Breast epithelium (tissue), 4 donors: ENCODE measurements at regions of chr2 and their contacts with region 1.

Region 1: DNA sequence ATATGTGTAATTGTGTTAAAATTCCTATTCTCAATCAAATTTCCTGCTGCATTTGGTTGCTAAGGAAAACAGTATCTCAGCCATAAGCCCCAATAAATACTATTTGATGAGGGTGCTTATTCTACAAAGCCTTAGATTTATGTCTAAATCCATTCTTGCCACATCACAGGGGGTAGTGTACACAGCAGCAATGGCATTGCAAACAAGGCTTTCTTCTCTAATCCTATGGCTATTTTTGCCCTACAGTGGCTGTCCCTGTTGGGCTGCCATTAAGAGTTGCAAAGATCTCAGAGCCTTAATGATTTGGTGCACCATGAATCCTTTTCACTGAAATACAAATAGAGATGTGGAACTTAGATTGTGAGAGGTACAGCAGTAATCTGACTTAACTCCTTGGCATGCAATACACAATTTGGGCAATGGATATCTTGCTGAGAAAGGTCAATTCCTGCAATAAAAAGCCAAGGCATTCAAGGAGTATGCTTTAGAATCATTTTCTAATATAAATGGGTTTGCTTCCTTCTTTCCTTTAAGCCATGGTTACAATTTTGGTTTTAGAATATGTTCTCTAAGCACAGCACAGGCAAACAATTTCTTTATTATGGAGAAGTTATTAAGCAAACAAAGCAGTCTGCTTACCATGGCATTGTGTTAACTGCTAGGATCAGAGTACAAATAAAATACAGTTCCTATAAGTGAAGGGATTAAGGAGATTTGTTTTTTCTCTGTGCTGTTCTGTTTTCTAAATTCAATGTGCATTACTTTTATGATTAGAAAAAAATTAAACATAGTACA is 69.8 kb upstream of the CD302 start:
- DNase-seq: no peak
- H3K4me3 ChIP-seq: no peak overlapping the region
- H3K27ac ChIP-seq: no peak overlapping the region
- H3K4me1 ChIP-seq: no peaks in the 10 kb centered on the region
- H3K27me3 ChIP-seq: no peaks in the 10 kb centered on the region
- CTCF ChIP-seq: no peak
- POLR2A ChIP-seq: no peak

Region 2: GRCh38 chr2:159349674-159350299 is 518.0 kb before region 1 on chr2:
- intact Hi-C with region 1: no loop called
- DNase-seq: no peak
- H3K4me3 ChIP-seq: no peak overlapping the region
- H3K27ac ChIP-seq: no peak overlapping the region
- H3K4me1 ChIP-seq: no peaks in the 10 kb centered on the region
- H3K27me3 ChIP-seq: no peaks in the 10 kb centered on the region
- CTCF ChIP-seq: no peak
- POLR2A ChIP-seq: no peak

Region 3: DNA sequence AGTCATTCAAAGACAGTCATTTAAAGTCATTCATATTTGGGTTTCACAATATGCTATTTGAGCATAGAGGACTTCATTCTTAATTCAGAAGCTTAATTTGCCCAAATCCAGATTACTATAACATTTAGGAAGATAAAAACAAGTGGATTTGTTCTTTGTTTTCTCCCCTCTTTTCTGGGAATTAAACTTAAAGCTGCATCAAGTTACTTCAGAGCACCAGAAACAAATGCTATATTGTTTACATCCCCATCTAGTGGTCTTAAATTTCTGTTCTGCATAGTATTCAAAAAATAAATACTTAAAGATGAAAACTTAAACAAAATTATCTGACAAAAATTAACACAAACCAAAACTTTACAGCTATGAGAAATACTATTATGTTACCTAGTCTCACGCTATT is 190.1 kb before region 1 on chr2:
- intact Hi-C with region 1: loop called (anchors 10 kb)
- DNase-seq: no peak
- H3K4me3 ChIP-seq: no peak overlapping the region
- H3K27ac ChIP-seq: no peak overlapping the region
- H3K4me1 ChIP-seq: no peaks in the 10 kb centered on the region
- H3K27me3 ChIP-seq: no peaks in the 10 kb centered on the region
- CTCF ChIP-seq: no peak
- POLR2A ChIP-seq: no peak

Region 4: DNA sequence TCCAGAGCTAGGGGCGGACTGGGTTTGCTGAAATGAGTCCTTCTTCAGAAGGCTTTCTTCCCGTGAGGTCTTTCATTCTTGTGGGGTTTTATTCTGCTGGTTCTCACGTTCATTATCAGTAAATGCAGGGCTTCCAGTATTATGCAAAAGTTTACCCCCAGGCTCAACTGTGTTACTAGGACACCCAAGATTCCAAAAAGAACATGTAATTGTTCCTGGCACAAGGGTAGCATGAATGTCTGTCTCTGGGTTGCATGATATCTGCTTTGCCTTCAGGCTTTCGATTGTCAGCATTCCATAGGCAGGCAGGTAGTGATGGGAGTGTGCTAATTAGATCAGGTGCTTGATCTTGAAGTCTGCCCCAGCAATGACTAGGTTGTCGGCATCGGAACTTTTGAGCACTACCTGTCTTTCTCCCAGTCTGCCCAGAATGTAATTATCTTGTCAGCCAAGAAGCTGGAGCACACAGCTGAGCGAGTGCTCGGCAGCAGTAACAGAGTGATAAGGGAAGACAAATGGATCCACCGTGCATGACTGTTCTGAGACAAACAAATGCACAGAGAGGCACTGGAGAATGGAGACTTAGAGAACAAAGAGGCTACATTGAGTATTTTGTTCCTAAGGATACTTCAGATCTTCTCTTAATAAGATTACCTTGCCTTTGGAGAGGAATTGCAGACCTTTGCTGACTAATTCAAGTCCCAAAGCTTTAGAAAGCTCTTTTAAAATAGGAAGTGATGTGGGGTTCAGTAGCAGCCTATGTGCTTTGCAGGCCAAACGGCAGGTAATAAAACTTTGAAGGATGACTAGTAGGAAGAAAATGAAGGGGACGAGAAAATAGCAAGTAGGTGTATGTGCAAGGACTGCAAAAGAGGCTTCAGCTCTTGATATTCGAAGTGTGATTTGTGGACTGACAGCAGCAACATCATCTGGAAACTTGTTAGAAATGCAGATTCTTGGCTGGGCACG is 290.4 kb after region 1 on chr2:
- intact Hi-C with region 1: no loop called
- DNase-seq: peak in 1 of 2 donors; percentile 35
- H3K4me3 ChIP-seq: no peak overlapping the region
- H3K27ac ChIP-seq: peak overlapping the region; percentile 68 to 85
- H3K4me1 ChIP-seq: no peaks in the 10 kb centered on the region
- H3K27me3 ChIP-seq: no peaks in the 10 kb centered on the region
- CTCF ChIP-seq: no peak
- POLR2A ChIP-seq: no peak